ENCODE measurements at regions of chr13 and their contacts with region 1.

Region 1: GRCh38 chr13:28494776-28495537 is at the start of gene FLT1:
- DNase-seq: peak; percentile 74
- H3K4me3 ChIP-seq: peak within 1 kb of the TSS; percentile 95 to 98 (median 96)
- H3K27ac ChIP-seq: peak within 1 kb of the TSS; percentile 85
- H3K4me1 ChIP-seq: peaks cover 44% of the 10 kb centered on the region
- H3K27me3 ChIP-seq: no peaks in the 10 kb centered on the region
- CTCF ChIP-seq: no peak
- POLR2A ChIP-seq: peak; percentile 90
- total RNA-seq, gene FLT1: 104 and 178 TPM in 2 replicates

Region 2: GRCh38 chr13:28037399-28037798 is 457.6 kb before region 1 on chr13:
- CTCF ChIA-PET with region 1: no interaction called
- POLR2A ChIA-PET with region 1: no interaction called
- dilution Hi-C with region 1: no loop called
- intact Hi-C with region 1: no loop called
- DNase-seq: no peak
- H3K4me3 ChIP-seq: no peak overlapping the region
- H3K27ac ChIP-seq: no peak overlapping the region
- H3K4me1 ChIP-seq: no peaks in the 10 kb centered on the region
- H3K27me3 ChIP-seq: peaks cover 2 to 5% of the 10 kb centered on the region in 2 experiments
- CTCF ChIP-seq: no peak
- POLR2A ChIP-seq: no peak

Region 3: GRCh38 chr13:28138012-28138755 is 356.8 kb before region 1 on chr13 and contains the start of gene PAN3:
- CTCF ChIA-PET with region 1: no interaction called
- POLR2A ChIA-PET with region 1: no interaction called
- dilution Hi-C with region 1: no loop called
- intact Hi-C with region 1: loop called (anchors 10 kb)
- DNase-seq: peak; percentile 92
- H3K4me3 ChIP-seq: peak within 1 kb of the TSS; percentile 78 to 100 (median 99)
- H3K27ac ChIP-seq: peak within 1 kb of the TSS; percentile 93
- H3K4me1 ChIP-seq: peaks cover 20% of the 10 kb centered on the region
- H3K27me3 ChIP-seq: no peaks in the 10 kb centered on the region
- CTCF ChIP-seq: no peak
- POLR2A ChIP-seq: peak; percentile 91
- total RNA-seq, gene PAN3: 31.6 and 31.9 TPM in 2 replicates

Region 4: GRCh38 chr13:28475916-28476725 is 18.8 kb before region 1 on chr13:
- CTCF ChIA-PET with region 1: interaction called, 28 read pairs
- POLR2A ChIA-PET with region 1: no interaction called
- dilution Hi-C with region 1: no loop called
- intact Hi-C with region 1: loop called (anchors 1 kb)
- DNase-seq: peak; percentile 86
- H3K4me3 ChIP-seq: no peak overlapping the region
- H3K27ac ChIP-seq: peak overlapping the region; percentile 59
- H3K4me1 ChIP-seq: peaks cover 61% of the 10 kb centered on the region
- H3K27me3 ChIP-seq: no peaks in the 10 kb centered on the region
- CTCF ChIP-seq: no peak
- POLR2A ChIP-seq: no peak

Region 5: GRCh38 chr13:28531077-28531844 is 36.3 kb after region 1 on chr13:
- CTCF ChIA-PET with region 1: interaction called, 8 read pairs
- POLR2A ChIA-PET with region 1: no interaction called
- dilution Hi-C with region 1: no loop called
- intact Hi-C with region 1: loop called (anchors 1 kb)
- DNase-seq: peak; percentile 85
- H3K4me3 ChIP-seq: peak overlapping the region in 2 of 3 experiments; percentile 45
- H3K27ac ChIP-seq: peak overlapping the region; percentile 36
- H3K4me1 ChIP-seq: peaks cover 14% of the 10 kb centered on the region
- H3K27me3 ChIP-seq: no peaks in the 10 kb centered on the region
- CTCF ChIP-seq: no peak
- POLR2A ChIP-seq: no peak

Region 6: DNA sequence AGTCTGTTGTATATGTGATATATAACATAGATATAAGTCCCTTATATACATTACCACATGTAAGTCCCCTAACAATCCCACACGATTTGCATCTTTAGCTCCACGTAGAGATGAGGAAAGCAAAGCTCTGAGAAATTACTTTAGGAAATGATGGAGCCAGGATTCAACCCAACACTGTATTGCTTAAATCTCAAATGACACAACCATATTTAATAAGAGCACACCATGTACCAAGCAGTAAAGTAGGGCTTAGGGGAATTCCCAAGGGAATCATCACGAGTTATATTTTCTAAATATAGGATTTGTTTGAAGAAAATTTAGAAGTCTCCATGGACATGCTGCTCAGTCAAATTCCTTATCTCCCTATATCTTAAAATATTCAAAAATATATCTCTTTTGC is 102.7 kb after region 1 on chr13:
- CTCF ChIA-PET with region 1: no interaction called
- POLR2A ChIA-PET with region 1: no interaction called
- dilution Hi-C with region 1: no loop called
- intact Hi-C with region 1: no loop called
- DNase-seq: no peak
- H3K4me3 ChIP-seq: no peak overlapping the region
- H3K27ac ChIP-seq: no peak overlapping the region
- H3K4me1 ChIP-seq: no peaks in the 10 kb centered on the region
- H3K27me3 ChIP-seq: peaks cover 2 to 11% of the 10 kb centered on the region in 2 experiments
- CTCF ChIP-seq: no peak
- POLR2A ChIP-seq: no peak

Region 7: DNA sequence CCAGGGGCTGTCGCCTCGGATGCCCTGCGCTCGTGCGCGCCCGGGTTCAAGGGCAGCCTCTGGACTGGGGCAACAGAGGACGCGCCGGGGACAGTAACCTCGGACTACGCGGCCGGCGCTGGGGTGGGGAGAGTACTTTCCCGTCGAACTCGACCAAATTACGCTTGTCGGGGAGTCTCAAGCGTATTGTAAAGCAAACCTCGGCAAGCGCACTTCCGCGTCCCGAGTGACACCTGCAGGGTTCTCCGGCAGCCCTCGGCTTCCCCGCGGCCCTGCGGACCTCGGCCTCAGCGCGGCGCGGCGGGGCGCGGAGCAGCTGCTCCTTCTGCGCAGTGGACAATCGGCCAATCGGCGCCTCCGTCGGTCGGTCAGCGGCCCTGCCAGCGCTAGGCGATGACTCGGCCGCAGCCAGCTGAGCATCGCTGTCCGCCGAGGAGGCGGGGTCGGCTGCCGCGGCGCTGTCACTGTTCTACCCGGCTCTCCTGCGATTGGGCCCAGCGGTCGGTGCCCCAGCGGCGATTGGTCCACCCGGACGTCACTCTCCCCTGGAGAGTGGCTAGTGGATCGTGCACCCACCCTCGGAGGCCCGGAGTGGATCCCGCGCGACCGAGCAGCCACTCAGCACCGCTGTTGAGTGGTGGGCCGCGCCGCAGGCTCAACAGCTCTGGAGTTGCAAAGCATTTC is 223.7 kb after region 1 on chr13 and contains the start of gene SLC46A3:
- CTCF ChIA-PET with region 1: no interaction called
- POLR2A ChIA-PET with region 1: no interaction called
- dilution Hi-C with region 1: no loop called
- intact Hi-C with region 1: loop called (anchors 5 kb)
- DNase-seq: peak; percentile 99
- H3K4me3 ChIP-seq: peak within 1 kb of the TSS; percentile 43 to 61 (median 48)
- H3K27ac ChIP-seq: peak within 1 kb of the TSS; percentile 6
- H3K4me1 ChIP-seq: peaks cover 30% of the 10 kb centered on the region
- H3K27me3 ChIP-seq: no peaks in the 10 kb centered on the region
- CTCF ChIP-seq: peak in 1 of 2 donors; percentile 15
- POLR2A ChIP-seq: no peak
- total RNA-seq, gene SLC46A3: 2.1 and 3.9 TPM in 2 replicates